Activated CD4-positive, alpha-beta T cell treated with anti-CD3 and anti-CD28 coated beads for 36 hours (primary cell): ENCODE measurements at regions of chr15 and their contacts with region 1.

Region 1: DNA sequence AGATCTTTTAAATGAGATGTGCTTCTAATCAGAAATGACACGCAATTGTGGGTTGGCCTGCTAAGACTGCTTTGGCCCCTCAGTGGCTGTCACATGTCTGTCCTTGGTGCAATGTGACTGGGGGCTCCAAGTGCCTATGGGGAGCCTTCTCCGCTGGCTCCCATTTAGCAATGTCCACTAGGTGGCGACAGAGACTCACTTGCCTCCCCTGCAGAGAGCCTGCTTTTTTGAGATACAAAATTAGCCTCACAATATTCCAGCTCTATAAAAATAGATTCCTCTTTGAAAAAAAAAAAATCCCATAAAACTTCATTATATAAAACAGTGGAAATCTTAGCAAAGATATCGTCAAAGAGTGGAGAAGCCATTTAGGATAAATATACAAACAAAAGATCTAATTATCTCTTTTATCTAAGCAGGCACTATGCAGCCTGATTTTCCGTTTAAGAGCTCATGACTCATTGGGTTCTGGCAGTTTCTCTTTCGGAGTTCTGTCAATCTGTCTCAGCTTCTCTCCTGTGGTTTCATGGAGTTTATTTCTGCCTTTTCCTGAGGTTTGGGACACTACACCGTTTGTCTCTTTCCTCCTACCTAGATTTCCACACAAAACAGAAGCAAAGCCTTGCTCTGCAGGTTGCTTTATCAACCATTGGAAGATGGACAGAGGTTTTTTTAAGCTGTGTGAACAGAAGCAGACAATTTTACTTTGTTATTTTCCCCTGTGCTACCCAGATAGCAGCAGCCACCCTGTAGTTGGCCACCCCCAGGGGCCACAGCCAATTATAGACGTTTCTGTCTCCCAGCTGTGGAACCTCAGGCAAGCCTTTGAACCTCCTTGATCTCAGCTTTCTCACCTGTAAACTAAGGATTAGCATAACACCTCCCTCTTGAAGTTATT is 68.4 kb upstream of the TNFAIP8L3 start:
- DNase-seq: peak; percentile 82
- ATAC-seq: peak; percentile 93
- H3K4me3 Mint-ChIP-seq: no peak overlapping the region
- H3K27ac Mint-ChIP-seq: no peak overlapping the region
- H3K4me1 Mint-ChIP-seq: peaks cover 9% of the 10 kb centered on the region
- H3K27me3 Mint-ChIP-seq: peaks cover 20% of the 10 kb centered on the region

Region 2: GRCh38 chr15:51192521-51193280 is 29.6 kb after region 1 on chr15:
- CTCF ChIA-PET with region 1: interaction called, 52 read pairs
- POLR2A ChIA-PET with region 1: no interaction called
- intact Hi-C with region 1: loop called (anchors 1 kb)
- DNase-seq: peak; percentile 90
- ATAC-seq: peak; percentile 70
- H3K4me3 Mint-ChIP-seq: no peak overlapping the region
- H3K27ac Mint-ChIP-seq: no peak overlapping the region
- H3K4me1 Mint-ChIP-seq: no peaks in the 10 kb centered on the region
- H3K27me3 Mint-ChIP-seq: peaks cover 35% of the 10 kb centered on the region

Region 3: GRCh38 chr15:51281368-51281967 is 118.4 kb after region 1 on chr15:
- CTCF ChIA-PET with region 1: interaction called, 9 read pairs
- POLR2A ChIA-PET with region 1: no interaction called
- intact Hi-C with region 1: loop called in 1 of 2 experiments (anchors 1 kb)
- DNase-seq: peak; percentile 56
- ATAC-seq: no peak
- H3K4me3 Mint-ChIP-seq: no peak overlapping the region
- H3K27ac Mint-ChIP-seq: no peak overlapping the region
- H3K4me1 Mint-ChIP-seq: no peaks in the 10 kb centered on the region
- H3K27me3 Mint-ChIP-seq: peaks cover 10% of the 10 kb centered on the region

Region 4: DNA sequence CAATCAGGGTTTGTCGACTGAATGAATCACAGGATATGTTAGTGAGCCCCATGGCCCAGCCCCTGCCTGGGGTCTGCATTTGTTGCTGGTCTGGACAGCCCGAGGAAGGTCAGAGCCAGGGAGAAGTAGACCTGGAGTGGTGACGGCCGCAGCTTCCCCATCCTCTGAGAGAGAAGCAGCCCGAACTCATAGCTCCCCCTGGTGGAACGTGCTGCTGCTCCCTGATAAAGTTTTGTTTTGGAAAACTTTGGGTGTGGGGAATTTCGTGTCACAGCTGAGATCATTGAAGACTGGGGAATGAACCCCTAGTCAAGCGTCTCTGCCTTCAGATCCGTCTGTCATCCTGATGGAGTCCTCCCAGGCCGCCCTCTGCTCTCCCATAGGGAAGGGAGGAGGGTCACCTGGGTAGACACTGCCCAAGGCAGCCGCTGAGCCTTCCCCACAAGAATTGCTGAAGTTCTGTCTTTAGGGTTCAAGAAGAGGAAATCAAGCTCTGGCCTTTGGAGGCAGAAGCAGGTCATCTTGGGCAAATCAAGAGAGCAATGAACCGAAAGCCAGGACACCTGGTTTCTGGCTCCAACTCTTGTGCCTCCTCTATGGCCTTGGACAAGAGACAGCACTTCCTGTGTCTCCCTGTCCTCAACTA is 238.9 kb after region 1 on chr15:
- CTCF ChIA-PET with region 1: interaction called, 14 read pairs
- POLR2A ChIA-PET with region 1: no interaction called
- intact Hi-C with region 1: loop called (anchors 1 to 2 kb)
- DNase-seq: peak; percentile 22
- ATAC-seq: no peak
- H3K4me3 Mint-ChIP-seq: no peak overlapping the region
- H3K27ac Mint-ChIP-seq: no peak overlapping the region
- H3K4me1 Mint-ChIP-seq: no peaks in the 10 kb centered on the region
- H3K27me3 Mint-ChIP-seq: peaks cover 18% of the 10 kb centered on the region